Lower leg skin (tissue), 4 donors: ENCODE measurements at regions of chr4 and their contacts with region 1.

Region 1: GRCh38 chr4:87268411-87268810 is 48.0 kb upstream of the KLHL8 start:
- DNase-seq: no peak
- H3K4me3 ChIP-seq: no peak overlapping the region
- CTCF ChIP-seq: no peak
- POLR2A ChIP-seq: no peak

Region 2: DNA sequence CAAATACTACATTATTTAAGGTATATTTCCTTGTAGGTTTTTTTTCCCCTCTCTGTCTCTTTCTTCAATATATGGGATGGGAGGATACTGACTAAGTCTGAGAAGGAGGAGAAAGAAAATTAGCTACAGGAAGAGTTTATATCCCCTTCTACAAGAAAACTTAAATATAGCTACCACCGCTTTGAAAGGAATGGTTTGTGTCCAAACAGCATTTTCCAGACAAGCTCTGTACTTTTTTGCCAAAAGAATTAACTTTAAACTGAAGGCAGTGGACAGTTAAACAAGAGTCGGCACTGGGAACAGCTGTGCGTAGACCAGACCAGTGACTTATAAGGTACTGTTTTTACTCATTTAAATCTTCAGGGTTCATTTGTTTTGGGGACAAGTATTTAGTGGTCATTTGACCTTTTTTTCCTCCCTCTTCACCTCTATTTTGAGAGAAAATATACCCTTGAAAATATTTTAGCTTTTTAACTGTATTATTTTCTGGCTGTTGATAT is 1489.7 kb before region 1 on chr4:
- intact Hi-C with region 1: no loop called
- DNase-seq: no peak
- H3K4me3 ChIP-seq: no peak overlapping the region
- CTCF ChIP-seq: no peak
- POLR2A ChIP-seq: no peak

Region 3: GRCh38 chr4:86939729-86940575 is 328.5 kb before region 1 on chr4:
- intact Hi-C with region 1: no loop called
- DNase-seq: no peak
- H3K4me3 ChIP-seq: no peak overlapping the region
- CTCF ChIP-seq: no peak
- POLR2A ChIP-seq: no peak

Region 4: DNA sequence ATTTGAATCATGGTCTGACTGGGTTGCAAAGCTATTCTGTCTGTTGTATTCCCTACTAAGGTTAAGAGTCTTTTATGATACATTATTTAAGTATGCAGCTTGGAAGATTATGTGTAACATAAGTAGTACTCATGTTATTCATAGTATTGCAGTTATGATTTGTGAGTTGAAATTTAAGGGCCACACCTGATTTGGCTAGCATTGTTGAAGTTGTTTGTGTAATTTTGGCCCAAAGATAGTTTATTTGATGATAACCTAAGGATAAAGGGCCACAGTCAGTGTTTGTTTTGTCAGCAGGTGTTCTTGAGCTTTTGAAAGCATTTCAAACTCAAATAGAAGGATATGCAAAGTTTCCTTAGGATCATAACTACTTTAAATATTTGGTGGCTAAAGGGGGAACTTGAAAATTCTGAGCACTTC is 192.9 kb after region 1 on chr4:
- intact Hi-C with region 1: loop called (anchors 5 kb)
- DNase-seq: no peak
- H3K4me3 ChIP-seq: no peak overlapping the region
- CTCF ChIP-seq: no peak
- POLR2A ChIP-seq: no peak